ENCODE measurements at regions of chr6 and their contacts with region 1.

Region 1: GRCh38 chr6:25017932-25018567 is 82.3 kb upstream of the RIPOR2 start:
- DNase-seq: peak; percentile 85
- H3K4me3 Mint-ChIP-seq: no peak overlapping the region
- H3K27ac Mint-ChIP-seq: peak overlapping the region; percentile 52
- H3K4me1 Mint-ChIP-seq: peaks cover 41% of the 10 kb centered on the region
- H3K27me3 Mint-ChIP-seq: no peaks in the 10 kb centered on the region

Region 2: GRCh38 chr6:24855395-24856245 is 162.4 kb before region 1 on chr6:
- CTCF ChIA-PET with region 1: interaction called, 16 read pairs
- POLR2A ChIA-PET with region 1: interaction called, 3 read pairs
- DNase-seq: peak; percentile 81
- H3K4me3 Mint-ChIP-seq: no peak overlapping the region
- H3K27ac Mint-ChIP-seq: peak overlapping the region; percentile 88
- H3K4me1 Mint-ChIP-seq: peaks cover 59% of the 10 kb centered on the region
- H3K27me3 Mint-ChIP-seq: no peaks in the 10 kb centered on the region

Region 3: DNA sequence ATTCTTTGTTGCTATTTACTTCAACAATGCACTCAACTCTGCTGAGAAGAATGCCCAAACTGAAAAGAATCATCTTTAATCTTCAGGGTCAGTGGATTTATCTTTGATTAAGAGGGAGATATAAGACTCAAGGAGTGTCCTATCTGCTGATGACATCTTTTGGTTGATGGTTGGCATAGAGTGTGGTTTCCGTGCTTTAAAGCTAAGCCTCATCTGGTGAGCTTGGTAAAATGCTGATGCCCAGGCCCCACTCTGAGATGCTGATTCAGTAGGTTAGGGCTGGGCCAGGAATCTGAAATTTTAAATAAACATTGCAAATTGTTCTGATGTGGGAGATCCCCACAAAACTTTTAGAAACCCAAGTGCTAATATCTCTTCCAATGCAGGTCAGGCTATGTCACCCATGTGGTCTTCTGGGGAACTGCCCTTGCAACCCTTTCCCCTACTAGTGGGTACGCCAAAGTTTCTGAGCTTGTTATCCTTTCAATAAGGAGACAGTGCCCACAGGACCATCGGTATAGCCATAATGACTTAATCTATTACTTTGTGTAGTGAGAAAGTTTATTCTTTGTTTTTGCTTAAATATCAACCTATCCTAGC is 150.8 kb before region 1 on chr6:
- CTCF ChIA-PET with region 1: interaction called, 10 read pairs
- POLR2A ChIA-PET with region 1: no interaction called
- DNase-seq: no peak
- H3K4me3 Mint-ChIP-seq: no peak overlapping the region
- H3K27ac Mint-ChIP-seq: peak overlapping the region; percentile 41
- H3K4me1 Mint-ChIP-seq: peaks cover 59% of the 10 kb centered on the region
- H3K27me3 Mint-ChIP-seq: no peaks in the 10 kb centered on the region

Region 4: DNA sequence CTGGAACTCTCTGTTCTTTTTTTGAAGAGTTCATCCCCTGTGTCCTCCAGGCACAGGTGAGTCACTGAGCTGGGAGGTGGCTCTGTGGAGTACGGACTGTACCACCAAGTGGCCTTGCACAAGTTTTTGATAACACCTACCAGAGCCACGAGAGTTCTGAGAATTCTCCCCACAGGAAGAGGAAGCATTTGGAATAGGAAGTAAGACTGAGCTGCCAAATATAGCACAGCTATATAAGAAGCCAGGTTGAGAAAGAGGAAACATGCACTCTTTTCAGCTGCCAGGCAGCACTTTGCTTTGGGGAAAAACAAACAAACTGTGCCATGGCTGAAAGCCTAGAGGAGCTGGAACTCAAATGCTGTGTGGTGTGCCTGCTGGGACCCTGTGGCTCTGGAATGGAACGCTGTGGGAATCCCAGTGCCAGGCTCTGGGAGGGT is 11.5 kb before region 1 on chr6:
- CTCF ChIA-PET with region 1: interaction called, 19 read pairs
- POLR2A ChIA-PET with region 1: no interaction called
- DNase-seq: peak; percentile 66
- H3K4me3 Mint-ChIP-seq: peak overlapping the region; percentile 2
- H3K27ac Mint-ChIP-seq: peak overlapping the region; percentile 94
- H3K4me1 Mint-ChIP-seq: peaks cover 82% of the 10 kb centered on the region
- H3K27me3 Mint-ChIP-seq: no peaks in the 10 kb centered on the region

Region 5: GRCh38 chr6:25035527-25036435 is 17.7 kb after region 1 on chr6:
- CTCF ChIA-PET with region 1: interaction called, 15 read pairs
- POLR2A ChIA-PET with region 1: no interaction called
- DNase-seq: peak; percentile 24
- H3K4me3 Mint-ChIP-seq: peak overlapping the region; percentile 72
- H3K27ac Mint-ChIP-seq: peak overlapping the region; percentile 89
- H3K4me1 Mint-ChIP-seq: peaks cover 66% of the 10 kb centered on the region
- H3K27me3 Mint-ChIP-seq: no peaks in the 10 kb centered on the region